Activated CD4-positive, alpha-beta memory T cell treated with anti-CD3 and anti-CD28 coated beads for 36 hours (primary cell): ENCODE measurements at regions of chr1 and their contacts with region 1.

Region 1: DNA sequence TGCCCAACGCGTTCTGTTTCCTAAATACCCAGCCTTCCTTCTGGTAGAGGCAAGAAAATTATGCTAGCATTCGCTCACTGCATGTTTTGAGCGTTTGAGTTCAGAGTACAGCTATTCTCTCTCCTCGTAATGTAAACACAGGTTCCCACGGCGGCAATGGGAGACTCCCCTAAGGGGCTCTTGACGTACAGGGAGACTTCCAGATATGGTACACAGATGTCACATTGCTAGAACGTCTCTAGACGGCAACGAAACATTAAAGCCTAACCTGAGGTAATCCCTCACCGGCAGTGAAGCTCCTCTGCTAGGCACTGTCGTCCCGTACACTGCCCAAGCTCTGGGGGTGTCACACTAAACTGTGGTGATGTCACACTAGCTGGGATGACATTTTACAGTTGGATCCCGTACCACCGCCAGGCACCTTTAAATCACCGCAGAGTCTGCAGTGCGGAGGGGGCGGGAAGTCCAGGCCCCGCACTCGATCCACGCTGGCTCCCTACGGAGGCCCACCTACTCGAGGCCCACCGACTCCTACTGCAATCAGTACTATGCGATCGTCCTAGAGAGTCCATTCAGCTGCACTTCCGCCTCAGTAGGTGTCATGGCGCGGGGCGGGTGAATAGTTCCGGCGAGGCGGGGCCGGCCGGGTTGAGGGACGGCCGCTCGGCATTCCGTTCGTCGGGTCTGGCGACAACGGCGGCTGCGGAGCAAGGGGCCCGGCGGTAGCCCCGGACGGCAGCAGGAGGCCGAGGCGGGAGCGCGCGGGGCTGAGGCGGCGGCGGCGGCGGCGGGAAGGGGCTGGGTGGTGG is at the start of gene HIPK1:
- DNase-seq: peak; percentile 95
- H3K4me3 Mint-ChIP-seq: peak within 1 kb of the TSS; percentile 98
- H3K27ac Mint-ChIP-seq: peak within 1 kb of the TSS; percentile 99
- H3K4me1 Mint-ChIP-seq: peaks cover 46% of the 10 kb centered on the region
- H3K27me3 Mint-ChIP-seq: no peaks in the 10 kb centered on the region
- total RNA-seq, gene HIPK1: 55.3 to 55.7 TPM

Region 2: GRCh38 chr1:112955781-112956543 is 973.2 kb before region 1 on chr1 and contains the start of gene SLC16A1:
- CTCF ChIA-PET with region 1: no interaction called
- POLR2A ChIA-PET with region 1: no interaction called
- intact Hi-C with region 1: loop called (anchors 1 kb)
- DNase-seq: peak; percentile 92
- H3K4me3 Mint-ChIP-seq: peak within 1 kb of the TSS; percentile 98
- H3K27ac Mint-ChIP-seq: peak within 1 kb of the TSS; percentile 97
- H3K4me1 Mint-ChIP-seq: peaks cover 58% of the 10 kb centered on the region
- H3K27me3 Mint-ChIP-seq: no peaks in the 10 kb centered on the region
- total RNA-seq, gene SLC16A1: 48.7 to 53.3 TPM

Region 3: DNA sequence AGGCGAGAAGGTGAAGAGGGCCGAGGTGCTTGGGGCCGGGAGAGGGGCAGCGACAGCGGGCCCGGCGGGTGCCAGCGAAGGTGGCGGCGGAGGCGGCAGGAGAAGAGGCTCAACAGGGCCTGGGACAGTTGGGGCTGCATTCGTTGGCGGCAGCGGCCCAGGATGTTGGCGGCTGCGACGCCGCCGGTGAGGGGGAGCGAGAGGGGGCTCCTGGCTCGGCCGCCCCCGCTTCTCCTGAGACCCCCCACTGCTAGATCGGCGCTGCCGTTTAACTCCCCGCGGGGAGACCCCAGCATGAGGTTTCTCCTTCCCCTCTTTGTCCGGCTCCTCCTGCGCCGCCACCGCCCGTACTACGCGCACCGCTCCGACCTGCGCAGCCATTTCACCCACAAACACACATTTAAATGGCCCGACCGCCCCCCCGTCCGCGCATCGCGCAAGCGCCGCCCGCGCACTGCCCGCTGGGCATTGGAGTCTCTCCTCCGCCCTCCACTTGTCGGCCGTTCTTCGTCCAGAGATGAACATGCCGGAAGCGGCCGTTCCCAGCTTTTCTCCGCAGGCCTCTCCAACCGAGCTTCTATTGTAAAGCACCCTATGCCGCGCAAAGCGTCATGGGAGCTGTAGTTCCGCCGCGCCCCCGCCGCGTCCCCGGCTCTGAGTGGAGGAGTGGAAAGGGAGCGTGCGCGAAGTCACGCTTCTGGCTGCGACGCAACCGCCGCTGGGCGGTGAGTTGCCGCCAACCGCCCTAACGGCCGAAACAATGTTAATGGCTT is 117.1 kb before region 1 on chr1 and contains the start of gene RSBN1:
- CTCF ChIA-PET with region 1: interaction called, 3 read pairs
- POLR2A ChIA-PET with region 1: interaction called, 27 read pairs
- intact Hi-C with region 1: loop called (anchors 1 kb)
- DNase-seq: peak; percentile 100
- H3K4me3 Mint-ChIP-seq: peak within 1 kb of the TSS; percentile 99
- H3K27ac Mint-ChIP-seq: peak within 1 kb of the TSS; percentile 91
- H3K4me1 Mint-ChIP-seq: peaks cover 29% of the 10 kb centered on the region
- H3K27me3 Mint-ChIP-seq: no peaks in the 10 kb centered on the region
- total RNA-seq, gene RSBN1: 17.5 to 18.5 TPM

Region 4: DNA sequence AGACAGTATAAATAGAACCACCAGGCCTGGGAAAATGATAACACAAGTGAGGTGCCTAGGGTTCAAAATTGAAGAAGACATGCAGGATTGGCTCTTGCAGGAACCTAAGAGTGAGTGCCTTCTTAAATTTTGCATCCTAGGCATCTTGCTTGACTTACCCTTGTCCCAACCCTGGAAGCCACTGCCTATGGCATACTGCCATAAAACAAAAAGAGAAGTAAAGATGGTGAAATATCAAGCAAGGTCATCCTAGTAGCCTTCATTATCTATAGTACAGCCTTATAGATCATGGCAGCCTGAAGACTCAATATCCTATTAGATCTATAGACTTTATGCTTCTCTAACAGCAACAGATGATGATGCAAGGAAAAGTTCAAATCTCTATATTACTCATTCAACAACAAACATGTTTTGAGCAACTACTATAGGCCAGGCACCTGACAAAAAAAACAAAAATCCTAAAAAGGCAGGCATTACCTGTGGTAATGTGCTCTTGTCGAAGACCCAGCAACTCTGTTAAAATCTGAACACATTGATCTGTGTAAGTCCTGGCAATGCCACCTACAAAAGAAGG is 30.8 kb before region 1 on chr1:
- CTCF ChIA-PET with region 1: interaction called, 54 read pairs
- POLR2A ChIA-PET with region 1: interaction called, 137 read pairs
- intact Hi-C with region 1: no loop called
- DNase-seq: no peak
- H3K4me3 Mint-ChIP-seq: no peak overlapping the region
- H3K27ac Mint-ChIP-seq: peak overlapping the region; percentile 74
- H3K4me1 Mint-ChIP-seq: peaks cover 41% of the 10 kb centered on the region
- H3K27me3 Mint-ChIP-seq: no peaks in the 10 kb centered on the region

Region 5: GRCh38 chr1:113949007-113949406 is 19.9 kb after region 1 on chr1:
- CTCF ChIA-PET with region 1: interaction called, 42 read pairs
- POLR2A ChIA-PET with region 1: interaction called, 36 read pairs
- intact Hi-C with region 1: loop called (anchors 2 kb)
- DNase-seq: no peak
- H3K4me3 Mint-ChIP-seq: no peak overlapping the region
- H3K27ac Mint-ChIP-seq: peak overlapping the region; percentile 8
- H3K4me1 Mint-ChIP-seq: peaks cover 62% of the 10 kb centered on the region
- H3K27me3 Mint-ChIP-seq: no peaks in the 10 kb centered on the region

Region 6: GRCh38 chr1:114009393-114009792 is 80.2 kb after region 1 on chr1:
- CTCF ChIA-PET with region 1: no interaction called
- POLR2A ChIA-PET with region 1: no interaction called
- intact Hi-C with region 1: no loop called
- DNase-seq: no peak
- H3K4me3 Mint-ChIP-seq: no peak overlapping the region
- H3K27ac Mint-ChIP-seq: no peak overlapping the region
- H3K4me1 Mint-ChIP-seq: no peaks in the 10 kb centered on the region
- H3K27me3 Mint-ChIP-seq: peaks cover 1% of the 10 kb centered on the region

Region 7: GRCh38 chr1:114263343-114263742 is 334.2 kb after region 1 on chr1:
- CTCF ChIA-PET with region 1: no interaction called
- POLR2A ChIA-PET with region 1: no interaction called
- intact Hi-C with region 1: no loop called
- DNase-seq: no peak
- H3K4me3 Mint-ChIP-seq: no peak overlapping the region
- H3K27ac Mint-ChIP-seq: no peak overlapping the region
- H3K4me1 Mint-ChIP-seq: no peaks in the 10 kb centered on the region
- H3K27me3 Mint-ChIP-seq: peaks cover 6% of the 10 kb centered on the region

Region 8: DNA sequence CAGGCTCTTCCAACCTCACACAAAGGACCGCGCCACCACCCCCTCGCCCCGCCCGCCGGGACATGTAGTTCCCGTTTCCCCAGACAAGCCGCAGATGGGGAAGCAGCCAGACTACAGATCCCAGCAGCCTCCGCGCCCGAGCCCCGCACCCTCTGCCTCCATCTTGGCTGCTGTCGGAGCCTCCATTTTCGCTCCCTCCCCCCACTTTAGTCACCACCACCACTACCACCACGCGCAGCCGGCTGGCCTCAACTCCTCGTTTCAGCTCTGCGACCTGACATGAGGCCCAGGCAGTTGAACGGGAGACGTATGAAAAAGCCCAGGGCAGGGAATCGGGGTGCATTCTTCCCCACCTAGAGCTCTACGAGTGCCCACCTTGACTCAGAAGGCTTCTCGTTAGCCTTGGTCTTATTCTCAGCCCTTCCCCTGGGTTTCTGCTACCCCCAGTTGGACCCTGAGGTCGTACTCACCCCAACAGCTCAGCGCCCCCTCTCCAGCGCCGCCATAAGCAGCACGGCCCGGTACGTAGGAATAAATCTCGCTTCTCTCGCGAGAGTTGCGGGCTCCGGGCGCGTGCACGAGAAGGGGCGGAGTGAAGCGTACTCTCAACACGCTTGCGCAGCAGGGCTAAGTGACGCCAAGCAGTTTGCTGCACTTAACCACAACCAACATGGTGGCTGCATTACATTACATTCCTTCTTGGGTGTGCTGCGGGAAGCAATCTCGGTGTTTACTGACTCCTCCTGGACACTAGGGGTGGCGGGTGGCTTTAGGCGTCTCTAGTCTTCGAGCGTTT is 828.5 kb after region 1 on chr1 and contains the start of gene CSDE1:
- CTCF ChIA-PET with region 1: no interaction called
- POLR2A ChIA-PET with region 1: no interaction called
- intact Hi-C with region 1: loop called (anchors 10 kb)
- DNase-seq: peak; percentile 98
- H3K4me3 Mint-ChIP-seq: peak within 1 kb of the TSS; percentile 98
- H3K27ac Mint-ChIP-seq: peak within 1 kb of the TSS; percentile 100
- H3K4me1 Mint-ChIP-seq: peaks cover 47% of the 10 kb centered on the region
- H3K27me3 Mint-ChIP-seq: no peaks in the 10 kb centered on the region
- total RNA-seq, gene CSDE1: 452 to 464 TPM